Naive thymus-derived CD4-positive, alpha-beta T cell (primary cell): ENCODE measurements at regions of chr17 and their contacts with region 1.

Region 1: DNA sequence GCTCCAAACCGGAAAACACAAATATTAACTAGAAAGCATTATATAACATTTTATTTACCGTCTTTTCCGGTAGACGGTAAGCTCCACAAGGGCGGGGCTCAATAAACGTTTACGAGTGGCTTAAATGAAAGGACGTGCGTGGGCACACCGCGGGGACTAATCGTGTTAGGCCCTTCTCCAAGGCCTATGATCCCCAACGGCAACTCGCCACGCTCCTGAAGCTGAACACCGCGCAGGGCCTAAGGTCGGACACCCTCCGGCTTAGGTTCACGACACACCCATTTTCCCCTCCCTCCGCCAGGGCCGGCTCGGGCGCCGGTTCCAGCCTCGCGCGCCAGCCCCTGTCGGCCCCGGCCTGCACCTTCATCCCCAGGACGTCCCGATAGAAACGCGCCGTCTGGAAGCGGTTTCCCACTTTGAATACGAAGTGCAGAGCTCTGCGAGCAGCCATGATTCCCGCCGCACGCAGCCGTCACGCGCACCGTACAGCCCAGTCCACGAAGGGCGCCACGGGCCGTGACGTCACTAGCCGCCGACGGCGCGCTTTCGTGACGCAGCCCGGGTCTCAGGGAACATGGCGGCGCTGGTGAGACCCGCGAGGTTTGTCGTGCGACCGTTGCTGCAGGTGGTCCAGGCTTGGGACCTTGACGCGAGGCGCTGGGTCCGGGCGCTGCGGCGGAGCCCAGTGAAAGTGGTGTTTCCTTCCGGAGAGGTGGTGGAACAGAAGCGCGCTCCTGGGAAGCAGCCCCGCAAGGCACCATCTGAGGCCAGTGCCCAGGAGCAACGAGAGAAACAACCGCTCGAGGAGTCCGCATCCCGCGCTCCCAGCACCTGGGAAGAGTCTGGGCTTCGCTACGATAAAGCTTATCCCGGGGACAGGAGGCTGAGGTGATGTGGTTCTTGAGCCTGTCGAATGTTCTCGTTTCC is at the starts of genes GLOD4 and MRM3:
- DNase-seq: peak; percentile 92 to 100 (median 96)
- ATAC-seq: peak; percentile 98
- H3K4me3 ChIP-seq: peak within 1 kb of the TSS; percentile 88
- H3K4me3 Mint-ChIP-seq: peak within 1 kb of the TSS; percentile 95 to 98 (median 97)
- H3K27ac ChIP-seq: peak within 1 kb of the TSS; percentile 84
- H3K27ac Mint-ChIP-seq: peak within 1 kb of the TSS; percentile 95 to 98 (median 97)
- H3K4me1 ChIP-seq: peaks cover 16 to 24% of the 10 kb centered on the region in 2 donors
- H3K4me1 Mint-ChIP-seq: peaks cover 13 to 54% (median 38%) of the 10 kb centered on the region in 7 donors
- H3K27me3 ChIP-seq: no peaks in the 10 kb centered on the region
- H3K27me3 Mint-ChIP-seq: no peaks in the 10 kb centered on the region
- total RNA-seq, gene GLOD4: 60.1 to 79.0 (median 77.6) TPM
- total RNA-seq, gene MRM3: 19.3 to 47.1 (median 25.9) TPM

Region 2: GRCh38 chr17:716238-716637 is 65.8 kb before region 1 on chr17:
- CTCF ChIA-PET with region 1: no interaction called
- POLR2A ChIA-PET with region 1: interaction called, 6 read pairs
- intact Hi-C with region 1: loop called in 1 of 2 experiments (anchors 1 kb)
- DNase-seq: no peak
- ATAC-seq: no peak
- H3K4me3 ChIP-seq: no peak overlapping the region
- H3K4me3 Mint-ChIP-seq: peak overlapping the region in 4 of 10 donors; percentile 35 to 80 (median 60)
- H3K27ac ChIP-seq: no peak overlapping the region
- H3K27ac Mint-ChIP-seq: no peak overlapping the region
- H3K4me1 ChIP-seq: peaks cover 10 to 12% of the 10 kb centered on the region in 2 donors
- H3K4me1 Mint-ChIP-seq: peaks cover 21 to 35% (median 28%) of the 10 kb centered on the region in 7 donors
- H3K27me3 ChIP-seq: no peaks in the 10 kb centered on the region
- H3K27me3 Mint-ChIP-seq: peaks cover 0 to 2% (median 0%) of the 10 kb centered on the region in 5 donors

Region 3: GRCh38 chr17:752002-752619 is 30.0 kb before region 1 on chr17 and contains the start of gene GEMIN4:
- CTCF ChIA-PET with region 1: interaction called, 5 read pairs
- POLR2A ChIA-PET with region 1: interaction called, 27 read pairs
- intact Hi-C with region 1: loop called (anchors 1 kb)
- DNase-seq: peak; percentile 92 to 100 (median 98)
- ATAC-seq: peak; percentile 96
- H3K4me3 ChIP-seq: peak within 1 kb of the TSS; percentile 80
- H3K4me3 Mint-ChIP-seq: peak within 1 kb of the TSS; percentile 90 to 97 (median 96)
- H3K27ac ChIP-seq: peak within 1 kb of the TSS; percentile 81
- H3K27ac Mint-ChIP-seq: peak within 1 kb of the TSS; percentile 88 to 98 (median 96)
- H3K4me1 ChIP-seq: peaks cover 15 to 22% of the 10 kb centered on the region in 2 donors
- H3K4me1 Mint-ChIP-seq: peaks cover 32 to 43% (median 40%) of the 10 kb centered on the region in 7 donors
- H3K27me3 ChIP-seq: no peaks in the 10 kb centered on the region
- H3K27me3 Mint-ChIP-seq: no peaks in the 10 kb centered on the region
- total RNA-seq, gene GEMIN4: 15.5 to 35.0 (median 28.9) TPM